ENCODE measurements at regions of chr14 and their contacts with region 1.

Region 1: GRCh38 chr14:95196290-95196689 is 39.0 kb upstream of the DICER1 start:
- DNase-seq: peak; percentile 60 to 71 (median 69)
- H3K4me3 ChIP-seq: no peak overlapping the region
- H3K27ac ChIP-seq: no peak overlapping the region
- H3K4me1 ChIP-seq: peaks cover 0 to 10% (median 8%) of the 10 kb centered on the region in 4 experiments
- H3K27me3 ChIP-seq: no peaks in the 10 kb centered on the region

Region 2: DNA sequence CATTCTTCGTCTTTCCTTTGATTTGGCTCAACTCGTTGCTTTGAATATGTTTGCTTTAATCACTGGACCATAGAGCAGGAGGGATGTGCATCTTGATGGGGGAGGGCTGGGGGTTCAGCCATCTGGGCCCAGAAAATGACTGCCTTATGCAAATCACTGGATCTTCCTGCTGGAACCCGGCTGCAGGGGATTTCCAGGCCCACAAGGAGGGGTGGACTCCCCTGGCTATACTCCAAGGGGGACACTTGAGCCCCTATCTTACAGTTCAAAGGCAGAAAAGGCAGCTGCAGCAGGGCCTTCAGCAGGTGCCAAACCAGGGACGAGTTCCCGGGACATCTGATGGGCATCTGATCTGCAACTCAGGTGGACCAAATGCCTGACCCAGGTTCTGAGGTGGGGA is 161.5 kb before region 1 on chr14:
- CTCF ChIA-PET with region 1: no interaction called
- POLR2A ChIA-PET with region 1: no interaction called
- DNase-seq: no peak
- H3K4me3 ChIP-seq: no peak overlapping the region
- H3K27ac ChIP-seq: no peak overlapping the region
- H3K4me1 ChIP-seq: no peaks in the 10 kb centered on the region
- H3K27me3 ChIP-seq: peaks cover 0 to 13% (median 0%) of the 10 kb centered on the region in 5 experiments

Region 3: DNA sequence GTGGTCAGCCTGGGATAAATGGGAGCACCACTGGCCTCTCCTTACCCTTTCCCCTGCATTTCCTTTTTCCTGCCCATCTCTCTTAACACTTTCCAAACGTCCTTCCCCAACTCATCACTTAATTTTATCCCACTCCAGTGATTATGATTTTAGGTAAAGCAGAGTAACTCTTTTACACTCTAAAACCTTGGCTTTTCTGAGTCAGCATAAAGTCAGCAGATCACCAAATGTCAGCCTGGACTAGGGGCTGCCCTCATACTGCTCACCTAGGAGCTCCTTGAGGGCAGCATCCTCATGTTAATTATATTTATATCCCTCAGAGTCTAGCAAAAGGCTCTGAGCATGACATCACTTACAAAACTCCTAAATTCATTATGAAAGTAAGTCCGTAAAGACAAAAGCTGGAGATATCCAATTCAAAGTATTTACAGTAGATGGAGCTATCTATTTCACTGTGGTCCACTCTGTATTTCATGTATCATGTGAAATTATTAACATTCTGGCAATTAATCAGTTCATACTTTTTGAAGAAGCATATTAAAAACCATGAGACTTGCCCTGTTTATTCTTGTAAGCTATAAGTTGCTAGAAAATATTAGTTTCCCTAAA is 22.0 kb before region 1 on chr14:
- CTCF ChIA-PET with region 1: interaction called, 10 read pairs
- POLR2A ChIA-PET with region 1: interaction called, 3 read pairs
- DNase-seq: peak in 1 of 3 donors; percentile 48
- H3K4me3 ChIP-seq: no peak overlapping the region
- H3K27ac ChIP-seq: no peak overlapping the region
- H3K4me1 ChIP-seq: peaks cover 0 to 11% (median 4%) of the 10 kb centered on the region in 4 experiments
- H3K27me3 ChIP-seq: no peaks in the 10 kb centered on the region

Region 4: DNA sequence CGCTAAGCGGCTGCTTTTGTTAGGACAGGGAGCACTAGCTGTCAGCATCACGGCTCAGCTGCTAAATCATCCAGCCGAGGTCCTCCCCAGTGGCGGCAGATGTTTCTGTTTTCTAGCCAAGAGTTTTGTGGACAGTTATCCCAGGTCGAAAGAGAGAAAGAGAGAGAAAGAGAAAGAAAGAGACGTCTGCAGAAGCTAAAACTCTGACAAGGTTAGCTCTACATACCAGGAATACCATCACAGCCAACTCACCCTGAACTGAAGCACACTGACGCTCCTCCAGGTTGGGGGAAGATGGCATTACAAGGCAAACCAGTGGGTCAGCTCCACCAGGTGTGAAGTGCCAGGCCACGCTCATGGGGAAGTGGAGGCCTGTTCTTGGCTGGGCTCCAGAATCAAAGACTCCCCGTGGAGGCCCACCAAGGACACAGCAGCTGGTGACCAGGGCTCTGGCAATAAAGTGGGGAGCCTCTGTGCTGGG is 25.9 kb after region 1 on chr14:
- CTCF ChIA-PET with region 1: no interaction called
- POLR2A ChIA-PET with region 1: no interaction called
- DNase-seq: no peak
- H3K4me3 ChIP-seq: no peak overlapping the region
- H3K27ac ChIP-seq: no peak overlapping the region
- H3K4me1 ChIP-seq: no peaks in the 10 kb centered on the region
- H3K27me3 ChIP-seq: peaks cover 0 to 2% (median 0%) of the 10 kb centered on the region in 5 experiments